Activated CD4-positive, alpha-beta T cell treated with anti-CD3 and anti-CD28 coated beads for 36 hours (primary cell): ENCODE measurements at regions of chr19 and their contacts with region 1.

Region 1: DNA sequence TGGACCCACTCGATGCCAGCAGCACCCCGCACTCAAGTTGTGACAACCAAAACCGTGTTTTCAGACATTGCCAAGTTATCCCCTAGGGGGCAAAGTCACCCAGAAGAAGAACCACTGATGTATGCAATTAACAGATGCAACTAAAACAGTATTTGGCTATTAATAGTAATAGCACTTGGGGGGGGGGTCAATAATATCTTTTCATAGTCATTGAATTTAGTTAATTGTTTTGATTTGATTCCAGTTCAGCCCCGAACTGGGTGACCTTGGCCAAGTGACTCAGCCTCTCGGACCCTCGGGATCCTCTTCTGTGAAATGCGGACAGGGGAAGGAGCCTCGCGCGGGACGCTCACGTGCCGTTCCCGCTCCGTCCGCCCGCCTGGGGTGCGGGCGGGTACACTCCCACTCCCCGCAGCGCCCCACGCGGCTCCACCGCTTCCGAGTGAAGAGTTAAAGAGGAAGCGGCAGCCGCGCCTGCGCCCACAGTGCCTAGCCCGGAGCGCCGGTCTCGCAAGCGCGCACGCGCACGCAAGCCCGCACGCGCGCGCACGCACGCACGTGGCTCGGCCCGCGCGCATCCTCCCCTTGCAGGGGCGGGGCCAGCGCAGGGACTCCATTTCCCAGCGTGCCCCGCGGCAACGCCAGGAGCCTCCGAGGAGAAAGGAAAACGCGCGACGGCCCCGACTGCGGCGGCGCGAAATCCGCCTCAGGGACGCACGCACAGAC is 449 bp upstream of the DAZAP1 start:
- DNase-seq: peak; percentile 99
- ATAC-seq: peak; percentile 83
- H3K4me3 Mint-ChIP-seq: peak overlapping the region; percentile 65
- H3K27ac Mint-ChIP-seq: peak overlapping the region; percentile 72
- H3K4me1 Mint-ChIP-seq: peaks cover 43% of the 10 kb centered on the region
- H3K27me3 Mint-ChIP-seq: peaks cover 2% of the 10 kb centered on the region

Region 2: GRCh38 chr19:1026189-1027019 is 380.5 kb before region 1 on chr19 and contains the start of gene CNN2:
- CTCF ChIA-PET with region 1: no interaction called
- POLR2A ChIA-PET with region 1: no interaction called
- intact Hi-C with region 1: loop called in 1 of 2 experiments (anchors 5 kb)
- DNase-seq: peak; percentile 83
- ATAC-seq: peak; percentile 58
- H3K4me3 Mint-ChIP-seq: peak within 1 kb of the TSS; percentile 88
- H3K27ac Mint-ChIP-seq: peak within 1 kb of the TSS; percentile 87
- H3K4me1 Mint-ChIP-seq: peaks cover 31% of the 10 kb centered on the region
- H3K27me3 Mint-ChIP-seq: no peaks in the 10 kb centered on the region
- total RNA-seq, gene CNN2: 108 to 130 TPM

Region 3: DNA sequence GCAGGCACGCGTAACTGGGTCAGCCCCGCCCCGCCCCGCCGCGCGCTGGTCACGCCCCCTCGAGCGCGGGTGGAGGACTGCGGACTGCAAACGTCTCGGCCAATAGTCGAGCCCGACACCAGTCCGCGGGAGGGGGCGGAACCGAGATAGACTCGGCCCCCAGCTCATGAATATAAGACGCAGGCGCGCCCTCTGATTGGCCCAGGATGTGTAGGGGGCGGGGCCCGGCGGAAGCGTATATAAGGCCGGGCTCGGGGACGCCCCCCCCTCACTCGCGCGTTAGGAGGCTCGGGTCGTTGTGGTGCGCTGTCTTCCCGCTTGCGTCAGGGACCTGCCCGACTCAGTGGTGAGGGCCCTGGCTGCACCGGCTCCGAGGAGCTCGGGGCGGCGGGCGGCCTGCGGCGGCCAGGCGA is 137.9 kb before region 1 on chr19 and contains the start of gene CIRBP:
- CTCF ChIA-PET with region 1: interaction called, 3 read pairs
- POLR2A ChIA-PET with region 1: interaction called, 5 read pairs
- intact Hi-C with region 1: loop called in 1 of 2 experiments (anchors 1 kb)
- DNase-seq: peak; percentile 100
- ATAC-seq: peak; percentile 87
- H3K4me3 Mint-ChIP-seq: peak within 1 kb of the TSS; percentile 84
- H3K27ac Mint-ChIP-seq: peak within 1 kb of the TSS; percentile 87
- H3K4me1 Mint-ChIP-seq: peaks cover 66% of the 10 kb centered on the region
- H3K27me3 Mint-ChIP-seq: no peaks in the 10 kb centered on the region
- total RNA-seq, gene CIRBP: 123 to 188 TPM

Region 4: GRCh38 chr19:1383311-1384084 is 23.4 kb before region 1 on chr19 and contains the start of gene NDUFS7:
- CTCF ChIA-PET with region 1: interaction called, 4 read pairs
- POLR2A ChIA-PET with region 1: interaction called, 5 read pairs
- intact Hi-C with region 1: loop called (anchors 1 kb)
- DNase-seq: peak; percentile 94
- ATAC-seq: peak; percentile 88
- H3K4me3 Mint-ChIP-seq: peak within 1 kb of the TSS; percentile 81
- H3K27ac Mint-ChIP-seq: peak within 1 kb of the TSS; percentile 92
- H3K4me1 Mint-ChIP-seq: peaks cover 21% of the 10 kb centered on the region
- H3K27me3 Mint-ChIP-seq: peaks cover 2% of the 10 kb centered on the region
- total RNA-seq, gene NDUFS7: 93.4 to 113 TPM

Region 5: DNA sequence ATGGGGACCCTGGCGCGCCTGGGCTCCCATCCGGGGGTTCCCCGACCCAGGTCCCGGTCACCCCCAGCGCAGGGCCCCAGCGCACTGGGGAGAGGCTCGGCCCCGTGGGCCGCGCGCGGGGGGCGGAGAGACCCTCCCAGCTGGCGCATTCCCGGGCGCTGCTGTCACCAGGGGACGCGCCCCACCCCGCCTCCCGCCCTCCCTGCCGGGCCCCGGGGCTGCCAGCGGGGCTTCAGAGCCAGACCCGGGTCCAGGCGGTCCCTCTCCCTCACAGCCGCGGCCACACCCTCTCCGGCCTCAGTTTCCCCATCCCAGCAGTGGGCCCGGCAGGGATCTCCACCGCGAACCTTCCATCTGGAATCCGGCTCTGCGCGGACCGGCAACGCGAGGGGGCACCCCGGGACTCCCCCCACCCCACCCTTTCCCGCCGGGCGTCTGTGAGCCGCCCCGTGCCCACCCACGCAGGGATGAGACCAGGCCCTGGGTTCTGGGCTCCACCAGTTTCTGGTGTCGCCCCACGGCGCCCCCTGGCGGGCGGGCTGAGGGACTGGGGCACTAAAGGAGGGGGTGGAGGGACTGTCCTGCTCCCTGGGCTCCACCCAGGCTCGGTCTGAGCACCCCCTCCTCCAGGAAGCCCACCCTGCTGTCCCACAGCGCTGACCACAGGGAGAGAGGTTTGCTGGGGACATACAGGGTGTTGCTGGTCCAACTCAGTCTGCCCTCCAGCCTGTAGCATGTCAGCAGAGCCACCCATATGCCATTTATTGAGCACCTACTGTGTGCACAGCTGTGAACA is 106.8 kb after region 1 on chr19:
- CTCF ChIA-PET with region 1: no interaction called
- POLR2A ChIA-PET with region 1: no interaction called
- intact Hi-C with region 1: loop called in 1 of 2 experiments (anchors 1 kb)
- DNase-seq: peak; percentile 88
- ATAC-seq: peak; percentile 60
- H3K4me3 Mint-ChIP-seq: no peak overlapping the region
- H3K27ac Mint-ChIP-seq: no peak overlapping the region
- H3K4me1 Mint-ChIP-seq: peaks cover 7% of the 10 kb centered on the region
- H3K27me3 Mint-ChIP-seq: no peaks in the 10 kb centered on the region

Region 6: DNA sequence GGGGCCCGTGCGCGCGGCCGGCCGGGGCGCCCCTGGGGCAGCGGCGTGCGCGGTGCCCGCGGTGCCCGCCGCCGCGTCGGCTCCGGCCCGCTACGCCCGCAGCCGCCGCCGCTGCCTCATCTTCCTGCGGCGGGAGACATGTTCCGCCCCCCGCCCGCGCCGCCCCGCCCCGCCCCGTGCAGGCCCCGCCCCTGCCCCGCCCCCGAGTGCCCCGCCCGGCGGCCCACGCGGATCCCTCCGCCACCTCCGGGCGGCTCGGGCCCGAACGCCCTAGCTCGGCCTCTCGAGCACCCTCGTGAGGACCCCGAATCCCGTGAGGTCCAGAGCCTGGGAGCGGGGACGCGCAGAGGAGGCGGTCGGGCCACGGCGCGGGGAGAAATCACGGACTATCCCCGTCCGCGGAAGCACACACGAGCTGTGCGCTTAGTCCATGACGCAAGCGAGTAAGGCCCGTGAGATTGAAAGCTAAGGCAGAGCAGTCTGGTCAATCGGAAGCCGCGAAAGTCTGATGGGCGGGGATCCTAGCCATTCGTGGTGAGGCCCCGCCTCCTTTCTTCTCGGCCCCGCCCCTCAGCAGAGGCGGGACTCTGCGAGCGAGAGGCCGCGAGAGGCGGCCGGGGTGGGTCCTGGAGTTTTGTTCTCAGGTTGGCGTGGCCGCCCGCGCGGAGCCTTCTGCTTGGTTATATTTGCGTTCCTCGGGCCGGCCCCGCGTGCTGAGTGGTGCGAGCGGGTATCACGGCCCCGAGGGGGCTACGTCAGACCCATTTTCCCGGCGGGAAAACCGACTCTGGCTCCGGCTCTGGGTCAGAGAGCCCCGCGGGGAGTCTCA is 245.7 kb after region 1 on chr19 and contains the start of gene TCF3:
- CTCF ChIA-PET with region 1: no interaction called
- POLR2A ChIA-PET with region 1: no interaction called
- intact Hi-C with region 1: loop called in 1 of 2 experiments (anchors 1 kb)
- DNase-seq: peak; percentile 99
- ATAC-seq: peak; percentile 94
- H3K4me3 Mint-ChIP-seq: peak within 1 kb of the TSS; percentile 88
- H3K27ac Mint-ChIP-seq: peak within 1 kb of the TSS; percentile 91
- H3K4me1 Mint-ChIP-seq: peaks cover 32% of the 10 kb centered on the region
- H3K27me3 Mint-ChIP-seq: no peaks in the 10 kb centered on the region
- total RNA-seq, gene TCF3: 115 to 133 TPM